Activated CD4-positive, alpha-beta T cell treated with anti-CD3 and anti-CD28 coated beads for 36 hours (primary cell): ENCODE measurements at regions of chr4 and their contacts with region 1.

Region 1: GRCh38 chr4:88211473-88212252 is 53.2 kb upstream of the ABCG2 start:
- DNase-seq: peak; percentile 60
- ATAC-seq: no peak
- H3K4me3 Mint-ChIP-seq: no peak overlapping the region
- H3K27ac Mint-ChIP-seq: no peak overlapping the region
- H3K4me1 Mint-ChIP-seq: no peaks in the 10 kb centered on the region
- H3K27me3 Mint-ChIP-seq: peaks cover 2% of the 10 kb centered on the region

Region 2: GRCh38 chr4:87679449-87680169 is 532.1 kb before region 1 on chr4:
- CTCF ChIA-PET with region 1: interaction called, 6 read pairs
- POLR2A ChIA-PET with region 1: no interaction called
- intact Hi-C with region 1: loop called (anchors 1 to 2 kb)
- DNase-seq: peak; percentile 62
- ATAC-seq: no peak
- H3K4me3 Mint-ChIP-seq: no peak overlapping the region
- H3K27ac Mint-ChIP-seq: no peak overlapping the region
- H3K4me1 Mint-ChIP-seq: no peaks in the 10 kb centered on the region
- H3K27me3 Mint-ChIP-seq: peaks cover 2% of the 10 kb centered on the region

Region 3: GRCh38 chr4:87732033-87732765 is 479.5 kb before region 1 on chr4:
- CTCF ChIA-PET with region 1: no interaction called
- POLR2A ChIA-PET with region 1: no interaction called
- intact Hi-C with region 1: no loop called
- DNase-seq: no peak
- ATAC-seq: no peak
- H3K4me3 Mint-ChIP-seq: no peak overlapping the region
- H3K27ac Mint-ChIP-seq: no peak overlapping the region
- H3K4me1 Mint-ChIP-seq: no peaks in the 10 kb centered on the region
- H3K27me3 Mint-ChIP-seq: peaks cover 2% of the 10 kb centered on the region

Region 4: DNA sequence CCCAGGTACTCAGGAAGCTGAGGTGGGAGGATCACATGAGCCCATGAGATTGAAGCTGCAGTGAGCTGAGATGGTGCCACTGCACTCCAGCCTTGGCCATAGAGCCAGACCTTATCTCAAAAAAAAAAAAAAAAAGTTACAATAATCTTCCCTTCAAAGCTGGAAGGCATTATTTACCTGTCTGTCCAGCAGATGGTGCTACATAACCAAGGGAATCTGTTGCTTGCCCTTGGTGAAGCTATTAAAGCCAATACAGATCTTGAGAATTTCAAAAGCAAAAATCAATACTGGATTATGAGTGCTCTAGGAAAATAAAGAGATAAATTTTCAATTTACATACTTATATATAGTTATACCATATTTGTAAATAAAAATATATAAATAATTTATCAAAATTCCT is 178.4 kb before region 1 on chr4:
- CTCF ChIA-PET with region 1: interaction called, 77 read pairs
- POLR2A ChIA-PET with region 1: interaction called, 3 read pairs
- intact Hi-C with region 1: loop called (anchors 1 kb)
- DNase-seq: peak; percentile 44
- ATAC-seq: peak; percentile 64
- H3K4me3 Mint-ChIP-seq: no peak overlapping the region
- H3K27ac Mint-ChIP-seq: no peak overlapping the region
- H3K4me1 Mint-ChIP-seq: peaks cover 6% of the 10 kb centered on the region
- H3K27me3 Mint-ChIP-seq: no peaks in the 10 kb centered on the region

Region 5: GRCh38 chr4:88158489-88159243 is 53.0 kb before region 1 on chr4 and contains the start of gene ABCG2:
- CTCF ChIA-PET with region 1: no interaction called
- POLR2A ChIA-PET with region 1: no interaction called
- intact Hi-C with region 1: no loop called
- DNase-seq: peak; percentile 63
- ATAC-seq: peak; percentile 75
- H3K4me3 Mint-ChIP-seq: peak within 1 kb of the TSS; percentile 76
- H3K27ac Mint-ChIP-seq: peak within 1 kb of the TSS; percentile 81
- H3K4me1 Mint-ChIP-seq: peaks cover 18% of the 10 kb centered on the region
- H3K27me3 Mint-ChIP-seq: peaks cover 27% of the 10 kb centered on the region
- total RNA-seq, gene ABCG2: 0.33 to 0.39 TPM

Region 6: DNA sequence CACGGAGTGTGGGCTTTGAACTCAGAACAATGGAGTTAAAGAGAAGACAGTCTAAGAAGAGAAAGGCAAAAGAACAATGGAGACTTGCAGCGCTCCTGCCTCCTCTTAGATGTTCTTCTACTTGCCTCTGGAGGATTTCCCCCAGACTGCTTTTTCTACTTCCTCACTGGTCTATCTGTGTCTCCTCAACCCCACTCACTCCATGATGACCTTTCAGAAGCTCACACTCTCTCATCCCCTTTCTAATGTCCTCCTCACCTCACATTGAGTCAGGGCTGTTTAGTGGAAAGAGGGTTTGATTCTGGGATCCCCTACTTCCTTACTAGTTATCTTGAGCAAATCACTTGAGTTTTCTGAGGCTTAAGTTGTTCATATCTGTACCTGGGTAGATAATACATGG is 154.8 kb after region 1 on chr4:
- CTCF ChIA-PET with region 1: no interaction called
- POLR2A ChIA-PET with region 1: no interaction called
- intact Hi-C with region 1: loop called in 1 of 2 experiments (anchors 5 kb)
- DNase-seq: no peak
- ATAC-seq: peak; percentile 39
- H3K4me3 Mint-ChIP-seq: no peak overlapping the region
- H3K27ac Mint-ChIP-seq: no peak overlapping the region
- H3K4me1 Mint-ChIP-seq: no peaks in the 10 kb centered on the region
- H3K27me3 Mint-ChIP-seq: peaks cover 4% of the 10 kb centered on the region

Region 7: GRCh38 chr4:89024051-89024675 is 812.5 kb after region 1 on chr4:
- CTCF ChIA-PET with region 1: interaction called, 3 read pairs
- POLR2A ChIA-PET with region 1: no interaction called
- intact Hi-C with region 1: loop called in 1 of 2 experiments (anchors 5 kb)
- DNase-seq: peak; percentile 58
- ATAC-seq: peak; percentile 91
- H3K4me3 Mint-ChIP-seq: no peak overlapping the region
- H3K27ac Mint-ChIP-seq: no peak overlapping the region
- H3K4me1 Mint-ChIP-seq: peaks cover 4% of the 10 kb centered on the region
- H3K27me3 Mint-ChIP-seq: peaks cover 2% of the 10 kb centered on the region

Region 8: GRCh38 chr4:89164400-89164799 is 952.7 kb after region 1 on chr4:
- CTCF ChIA-PET with region 1: no interaction called
- POLR2A ChIA-PET with region 1: no interaction called
- intact Hi-C with region 1: no loop called
- DNase-seq: no peak
- ATAC-seq: peak; percentile 49
- H3K4me3 Mint-ChIP-seq: no peak overlapping the region
- H3K27ac Mint-ChIP-seq: no peak overlapping the region
- H3K4me1 Mint-ChIP-seq: no peaks in the 10 kb centered on the region
- H3K27me3 Mint-ChIP-seq: peaks cover 5% of the 10 kb centered on the region